IMR-90 (cell line): ENCODE measurements at regions of chr4 and their contacts with region 1.

Region 1: GRCh38 chr4:177532358-177532757 is 90.1 kb upstream of the AGA start:
- DNase-seq: peak; percentile 19
- ATAC-seq: no peak
- H3K4me3 ChIP-seq: no peak overlapping the region
- H3K27ac ChIP-seq: no peak overlapping the region
- H3K4me1 ChIP-seq: 0 out of 2 replicates have a peak, but pooled peaks cover 3% of the 10 kb centered on the region
- H3K27me3 ChIP-seq: no peaks in the 10 kb centered on the region
- CTCF ChIP-seq: no peak
- POLR2A ChIP-seq: no peak
- RAD21 ChIP-seq: no peak

Region 2: GRCh38 chr4:176883681-176884418 is 648.5 kb before region 1 on chr4:
- CTCF ChIA-PET with region 1: no interaction called
- POLR2A ChIA-PET with region 1: no interaction called
- dilution Hi-C with region 1: no loop called
- in situ Hi-C with region 1: no loop called
- intact Hi-C with region 1: no loop called
- DNase-seq: peak; percentile 88
- ATAC-seq: peak; percentile 78
- H3K4me3 ChIP-seq: peak overlapping the region; percentile 30; the same call in 1 of the 2 replicates
- H3K27ac ChIP-seq: peak overlapping the region; percentile 53
- H3K4me1 ChIP-seq: peaks cover 9% of the 10 kb centered on the region
- H3K27me3 ChIP-seq: no peaks in the 10 kb centered on the region
- CTCF ChIP-seq: no peak
- POLR2A ChIP-seq: no peak
- RAD21 ChIP-seq: no peak

Region 3: DNA sequence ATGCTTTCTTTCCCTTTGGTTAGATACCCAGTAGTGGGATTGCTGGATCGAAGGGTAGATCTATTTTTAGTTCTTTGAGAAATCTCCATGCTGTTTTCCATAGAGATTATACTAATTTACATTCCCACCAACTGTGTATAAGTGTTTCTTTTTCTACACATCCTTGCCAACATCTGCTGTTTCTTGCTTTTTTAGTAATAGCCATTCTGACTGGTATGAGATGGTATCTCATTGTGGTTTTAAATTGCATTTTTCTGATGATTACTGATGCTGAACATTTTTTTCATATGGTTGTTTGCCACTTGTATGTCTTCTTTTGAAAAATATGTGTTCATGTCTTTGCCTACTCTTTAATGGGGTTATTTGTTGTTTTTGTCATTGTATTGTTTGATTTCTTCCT is 83.5 kb before region 1 on chr4:
- CTCF ChIA-PET with region 1: no interaction called
- POLR2A ChIA-PET with region 1: no interaction called
- dilution Hi-C with region 1: no loop called
- in situ Hi-C with region 1: no loop called
- intact Hi-C with region 1: loop called (anchors 5 kb)
- DNase-seq: peak; percentile 77
- ATAC-seq: peak; percentile 71
- H3K4me3 ChIP-seq: no peak overlapping the region
- H3K27ac ChIP-seq: no peak overlapping the region
- H3K4me1 ChIP-seq: peaks cover 2% of the 10 kb centered on the region; the same call in 1 of the 2 replicates
- H3K27me3 ChIP-seq: no peaks in the 10 kb centered on the region
- CTCF ChIP-seq: no peak
- POLR2A ChIP-seq: no peak
- RAD21 ChIP-seq: no peak

Region 4: DNA sequence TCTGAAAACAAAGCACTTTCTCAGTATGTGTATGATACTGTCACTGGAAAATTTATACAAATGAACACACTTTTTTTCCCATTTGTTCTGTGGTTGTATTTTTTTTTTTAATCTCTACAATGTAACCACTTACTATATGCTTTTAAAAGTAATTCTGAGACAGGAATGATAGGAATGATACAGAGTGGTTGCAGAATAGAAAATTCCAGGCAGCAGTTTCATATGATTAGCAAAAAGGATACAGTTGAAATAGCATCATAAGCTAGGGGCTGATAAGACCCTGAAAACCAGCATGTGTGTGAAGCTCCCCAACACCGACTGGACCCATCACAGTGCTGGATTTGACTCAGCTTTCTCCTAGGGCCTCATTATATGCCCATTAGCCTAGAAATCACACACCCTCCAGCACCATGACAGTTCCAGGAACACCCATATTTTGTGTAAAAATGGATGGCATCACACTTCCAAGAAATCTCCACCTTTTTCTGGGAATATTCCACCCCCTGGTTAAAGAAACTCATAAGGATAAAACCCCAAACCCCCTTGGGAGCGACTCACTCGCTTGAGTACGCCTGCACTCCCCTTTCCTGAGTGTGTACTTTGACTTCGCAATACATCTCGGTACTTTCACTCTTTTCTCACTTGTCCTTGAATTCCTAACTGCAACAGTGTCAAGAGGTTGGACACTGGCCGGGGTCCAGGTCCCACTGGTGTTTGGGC is 12.7 kb before region 1 on chr4:
- CTCF ChIA-PET with region 1: no interaction called
- POLR2A ChIA-PET with region 1: interaction called, 14 read pairs
- dilution Hi-C with region 1: no loop called
- in situ Hi-C with region 1: no loop called
- intact Hi-C with region 1: no loop called
- DNase-seq: peak; percentile 41
- ATAC-seq: peak; percentile 80
- H3K4me3 ChIP-seq: no peak overlapping the region
- H3K27ac ChIP-seq: peak overlapping the region; percentile 22; the same call in 1 of the 2 replicates
- H3K4me1 ChIP-seq: peaks cover 5% of the 10 kb centered on the region
- H3K27me3 ChIP-seq: no peaks in the 10 kb centered on the region
- CTCF ChIP-seq: no peak
- POLR2A ChIP-seq: no peak
- RAD21 ChIP-seq: no peak

Region 5: GRCh38 chr4:178553201-178553600 is 1020.8 kb after region 1 on chr4:
- CTCF ChIA-PET with region 1: no interaction called
- POLR2A ChIA-PET with region 1: no interaction called
- dilution Hi-C with region 1: no loop called
- in situ Hi-C with region 1: no loop called
- intact Hi-C with region 1: no loop called
- DNase-seq: no peak
- ATAC-seq: no peak
- H3K4me3 ChIP-seq: no peak overlapping the region
- H3K27ac ChIP-seq: no peak overlapping the region
- H3K4me1 ChIP-seq: no peaks in the 10 kb centered on the region
- H3K27me3 ChIP-seq: no peaks in the 10 kb centered on the region
- CTCF ChIP-seq: no peak
- POLR2A ChIP-seq: no peak
- RAD21 ChIP-seq: no peak